HepG2 (cell line): ENCODE measurements at regions of chr14 and their contacts with region 1.

Region 1: GRCh38 chr14:72516936-72517700 is 376.8 kb downstream of the DPF3 start:
- DNase-seq: peak; percentile 46
- ATAC-seq: peak; percentile 85
- H3K4me3 ChIP-seq: no peak overlapping the region
- H3K27ac ChIP-seq: no peak overlapping the region
- H3K4me1 ChIP-seq: no peaks in the 10 kb centered on the region
- H3K27me3 ChIP-seq: peaks cover 3 to 27% of the 10 kb centered on the region in 2 experiments; a peak in 3 of 5 replicates
- CTCF ChIP-seq: peak; percentile 84
- EP300 ChIP-seq: no peak
- POLR2A ChIP-seq: no peak
- RAD21 ChIP-seq: peak; percentile 68

Region 2: DNA sequence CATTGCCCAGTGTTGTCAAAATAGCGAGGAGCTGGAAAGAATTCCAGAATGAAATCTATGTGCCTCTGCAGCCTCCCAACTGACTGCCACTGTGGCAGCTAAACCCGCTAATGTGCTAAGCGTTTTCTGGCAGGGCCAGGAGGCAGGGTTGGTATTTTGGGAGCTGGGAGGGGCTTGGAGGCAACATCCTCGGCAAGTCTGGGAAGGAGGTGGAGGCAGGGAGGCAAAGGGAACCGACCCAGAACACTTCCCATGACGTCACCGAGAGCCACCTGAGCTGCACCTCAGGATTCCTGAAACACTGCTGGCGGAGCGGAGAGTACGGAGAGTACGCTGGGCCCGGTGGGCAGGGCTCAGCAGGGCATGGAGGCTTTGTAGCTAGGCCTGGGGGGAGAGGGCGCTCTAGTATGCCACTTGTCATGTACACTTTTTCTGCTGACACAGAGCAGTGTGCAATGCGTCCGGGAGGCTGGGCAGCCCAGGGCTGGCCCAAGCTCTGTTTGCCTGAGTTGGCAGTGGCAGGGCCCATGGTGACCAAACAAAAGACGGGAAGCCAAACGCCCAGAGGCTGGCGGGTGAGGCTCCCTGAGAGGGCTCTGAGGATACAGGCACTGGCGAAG is 295.3 kb after region 1 on chr14:
- CTCF ChIA-PET with region 1: no interaction called
- POLR2A ChIA-PET with region 1: no interaction called
- in situ Hi-C with region 1: no loop called
- intact Hi-C with region 1: loop called (anchors 10 kb)
- DNase-seq: no peak
- ATAC-seq: peak; percentile 53
- H3K4me3 ChIP-seq: peak overlapping the region in 1 of 3 experiments; percentile 23; a peak in 1 of 6 replicates
- H3K27ac ChIP-seq: no peak overlapping the region
- H3K4me1 ChIP-seq: 0 out of 2 replicates have a peak, but pooled peaks cover 13% of the 10 kb centered on the region
- H3K27me3 ChIP-seq: peaks cover 5 to 12% of the 10 kb centered on the region in 2 experiments; a peak in 4 of 5 replicates
- CTCF ChIP-seq: peak; percentile 25
- EP300 ChIP-seq: no peak
- POLR2A ChIP-seq: no peak
- RAD21 ChIP-seq: no peak

Region 3: DNA sequence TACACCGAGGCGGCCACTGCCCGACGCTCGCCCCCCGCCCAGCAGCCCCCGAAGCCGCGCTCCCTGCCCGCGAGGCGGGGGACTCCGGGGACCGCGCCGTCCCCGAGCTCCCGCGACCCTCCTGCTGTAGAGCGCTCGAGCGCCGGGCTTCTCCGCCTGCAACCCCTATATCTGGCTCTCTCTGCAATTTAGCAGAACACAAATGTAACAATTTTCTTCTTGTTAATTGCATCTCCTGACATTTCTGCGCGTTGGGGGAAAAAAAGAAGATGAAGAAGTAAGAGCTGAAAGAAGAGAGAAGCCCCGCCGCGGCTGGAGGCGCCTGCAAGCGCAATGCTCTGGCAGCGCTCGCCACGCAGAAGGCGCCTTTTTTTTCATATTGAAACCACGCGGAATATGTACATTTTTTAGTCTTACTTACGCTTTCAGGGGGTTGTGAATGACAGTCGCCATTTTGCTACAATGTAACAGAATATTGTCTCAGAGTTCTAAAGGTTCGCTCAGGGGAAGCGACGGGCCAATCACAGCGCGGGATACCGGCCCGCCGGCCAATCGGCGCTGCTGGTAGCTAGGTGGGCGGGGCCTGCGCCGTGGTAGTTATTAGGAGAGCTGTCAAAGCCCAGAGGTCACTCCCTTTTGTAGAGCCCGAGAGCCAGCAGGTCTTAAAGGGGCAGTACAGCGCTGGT is 376.7 kb after region 1 on chr14 and contains the start of gene DPF3:
- CTCF ChIA-PET with region 1: no interaction called
- POLR2A ChIA-PET with region 1: no interaction called
- in situ Hi-C with region 1: loop called (anchors 5 kb)
- intact Hi-C with region 1: no loop called
- DNase-seq: peak; percentile 89
- ATAC-seq: peak; percentile 97
- H3K4me3 ChIP-seq: peak within 1 kb of the TSS; percentile 65 to 82 (median 73)
- H3K27ac ChIP-seq: no peak within 1 kb of the TSS
- H3K4me1 ChIP-seq: peaks cover 29% of the 10 kb centered on the region
- H3K27me3 ChIP-seq: peaks cover 9 to 51% of the 10 kb centered on the region in 2 experiments; a peak in 4 of 5 replicates
- CTCF ChIP-seq: no peak
- EP300 ChIP-seq: no peak
- POLR2A ChIP-seq: no peak
- RAD21 ChIP-seq: no peak
- total RNA-seq, gene DPF3: 0.60 TPM in 2 replicates

Region 4: GRCh38 chr14:72904840-72905561 is 387.9 kb after region 1 on chr14:
- CTCF ChIA-PET with region 1: interaction called, 32 read pairs
- POLR2A ChIA-PET with region 1: interaction called, 3 read pairs
- in situ Hi-C with region 1: no loop called
- intact Hi-C with region 1: loop called (anchors 1 kb)
- DNase-seq: peak; percentile 53
- ATAC-seq: peak; percentile 79
- H3K4me3 ChIP-seq: no peak overlapping the region
- H3K27ac ChIP-seq: no peak overlapping the region
- H3K4me1 ChIP-seq: peaks cover 21% of the 10 kb centered on the region
- H3K27me3 ChIP-seq: peaks cover 0 to 6% of the 10 kb centered on the region in 2 experiments; a peak in 2 of 5 replicates
- CTCF ChIP-seq: peak; percentile 89
- EP300 ChIP-seq: no peak
- POLR2A ChIP-seq: no peak
- RAD21 ChIP-seq: peak; percentile 88

Region 5: GRCh38 chr14:72948481-72949138 is 431.5 kb after region 1 on chr14:
- CTCF ChIA-PET with region 1: interaction called, 11 read pairs
- POLR2A ChIA-PET with region 1: no interaction called
- in situ Hi-C with region 1: loop called (anchors 5 kb)
- intact Hi-C with region 1: loop called (anchors 1 kb)
- DNase-seq: peak; percentile 27
- ATAC-seq: peak; percentile 67
- H3K4me3 ChIP-seq: no peak overlapping the region
- H3K27ac ChIP-seq: no peak overlapping the region
- H3K4me1 ChIP-seq: no peaks in the 10 kb centered on the region
- H3K27me3 ChIP-seq: no peaks in the 10 kb centered on the region
- CTCF ChIP-seq: peak; percentile 72
- EP300 ChIP-seq: no peak
- POLR2A ChIP-seq: no peak
- RAD21 ChIP-seq: 0 out of 2 replicates have a peak, but pooled peaks have one; percentile 11